Colonic mucosa (tissue), 4 donors: ENCODE measurements at regions of chr12 and their contacts with region 1.

Region 1: DNA sequence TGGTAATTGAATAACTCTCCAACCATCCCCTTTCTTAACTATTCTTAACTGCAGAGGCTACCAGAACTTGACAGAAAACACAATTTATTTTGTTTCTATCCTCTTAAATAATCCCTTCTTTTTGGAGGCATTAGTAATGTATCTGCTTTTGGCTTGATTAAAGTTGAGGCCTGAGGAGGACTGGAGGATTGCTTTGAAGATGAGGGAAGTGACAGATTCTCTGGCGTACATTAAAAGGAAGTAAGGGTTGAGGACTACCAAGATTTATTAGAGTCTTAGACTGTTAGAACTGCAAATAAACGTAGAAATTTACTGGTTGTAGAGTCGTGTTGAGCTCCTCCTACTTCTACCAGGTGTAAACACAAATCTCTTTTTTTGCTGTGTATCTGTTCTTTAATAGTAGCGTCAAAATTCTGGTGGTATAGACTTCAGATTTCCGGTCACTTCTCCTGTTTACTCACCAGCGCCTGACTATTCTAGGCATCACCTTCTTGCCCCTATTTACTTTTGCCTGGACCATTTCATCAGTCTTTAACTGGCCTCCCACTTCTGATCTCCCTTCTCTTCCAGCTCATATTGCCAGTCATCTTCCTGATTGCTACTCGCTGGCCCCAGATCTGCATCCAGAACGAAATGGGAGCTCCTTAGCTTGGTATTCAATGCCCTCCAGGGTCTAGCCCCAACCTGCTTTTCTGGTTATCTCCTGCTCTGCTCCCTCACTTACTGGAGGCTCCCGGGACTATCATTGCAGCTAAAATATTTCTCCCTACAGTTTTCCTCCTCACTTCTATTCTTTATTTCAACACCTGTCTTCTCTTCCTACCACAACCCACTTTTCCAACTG is 8.5 kb upstream of the EID3 start:
- DNase-seq: no peak
- H3K4me3 ChIP-seq: no peak overlapping the region
- H3K27ac ChIP-seq: no peak overlapping the region
- H3K4me1 ChIP-seq: peaks cover 10% of the 10 kb centered on the region
- H3K27me3 ChIP-seq: no peaks in the 10 kb centered on the region
- CTCF ChIP-seq: no peak

Region 2: GRCh38 chr12:104215638-104216297 is 79.3 kb before region 1 on chr12 and contains the start of gene TXNRD1:
- intact Hi-C with region 1: loop called (anchors 5 kb)
- DNase-seq: peak; percentile 78
- H3K4me3 ChIP-seq: peak within 1 kb of the TSS; percentile 44
- H3K27ac ChIP-seq: no peak within 1 kb of the TSS
- H3K4me1 ChIP-seq: peaks cover 3% of the 10 kb centered on the region
- H3K27me3 ChIP-seq: no peaks in the 10 kb centered on the region
- CTCF ChIP-seq: peak; percentile 75
- total RNA-seq, gene TXNRD1: 110 to 129 TPM